ENCODE measurements at regions of chr5 and their contacts with region 1.

Region 1: GRCh38 chr5:60699530-60700382 is at the start of gene DEPDC1B:
- DNase-seq: peak; percentile 90
- ATAC-seq: peak; percentile 97
- H3K4me3 Mint-ChIP-seq: peak within 1 kb of the TSS; percentile 79
- H3K27ac Mint-ChIP-seq: peak within 1 kb of the TSS; percentile 92
- H3K4me1 Mint-ChIP-seq: peaks cover 36% of the 10 kb centered on the region
- H3K27me3 Mint-ChIP-seq: peaks cover 24% of the 10 kb centered on the region
- total RNA-seq, gene DEPDC1B: 49.1 to 50.8 TPM

Region 2: GRCh38 chr5:60687927-60688720 is 11.6 kb before region 1 on chr5:
- CTCF ChIA-PET with region 1: interaction called, 12 read pairs
- POLR2A ChIA-PET with region 1: interaction called, 8 read pairs
- DNase-seq: no peak
- ATAC-seq: peak; percentile 65
- H3K4me3 Mint-ChIP-seq: no peak overlapping the region
- H3K27ac Mint-ChIP-seq: no peak overlapping the region
- H3K4me1 Mint-ChIP-seq: no peaks in the 10 kb centered on the region
- H3K27me3 Mint-ChIP-seq: no peaks in the 10 kb centered on the region

Measured in activated CD8-positive, alpha-beta T cell treated with anti-CD3 and anti-CD28 coated beads, Interleukin-2, amount 10 ng/mL, durations not matched to agents 7 days and 5 days (primary cell).